ENCODE measurements at regions of chr17 and their contacts with region 1.

Region 1: GRCh38 chr17:51434434-51435170 is 174.3 kb downstream of the UTP18 start:
- DNase-seq: no peak
- ATAC-seq: no peak
- H3K4me3 ChIP-seq: no peak overlapping the region
- H3K27ac ChIP-seq: no peak overlapping the region
- H3K4me1 ChIP-seq: no peaks in the 10 kb centered on the region
- H3K27me3 ChIP-seq: no peaks in the 10 kb centered on the region
- CTCF ChIP-seq: no peak

Region 2: GRCh38 chr17:52930145-52930544 is 1495.5 kb after region 1 on chr17:
- intact Hi-C with region 1: loop called in 1 of 2 experiments (anchors 5 kb)
- DNase-seq: no peak
- ATAC-seq: peak in 3 of 4 donors; percentile 57 to 88 (median 85)
- H3K4me3 ChIP-seq: peak overlapping the region; percentile 16
- H3K27ac ChIP-seq: no peak overlapping the region
- H3K4me1 ChIP-seq: no peaks in the 10 kb centered on the region
- H3K27me3 ChIP-seq: no peaks in the 10 kb centered on the region
- CTCF ChIP-seq: no peak

Measured in psoas muscle (tissue), 8 donors.